Right cardiac atrium (tissue), 5 donors: ENCODE measurements at regions of chr14 and their contacts with region 1.

Region 1: GRCh38 chr14:74663884-74664283 is 49.0 kb downstream of the AREL1 start:
- DNase-seq: no peak
- ATAC-seq: peak; percentile 12 to 39
- H3K4me3 ChIP-seq: no peak overlapping the region
- H3K27ac ChIP-seq: peak overlapping the region; percentile 66
- H3K4me1 ChIP-seq: peaks cover 9% of the 10 kb centered on the region
- H3K27me3 ChIP-seq: no peaks in the 10 kb centered on the region

Region 2: GRCh38 chr14:74618078-74618952 is 45.6 kb before region 1 on chr14:
- intact Hi-C with region 1: loop called in 1 of 4 experiments (anchors 5 kb)
- DNase-seq: no peak
- ATAC-seq: peak in 1 of 2 donors; percentile 12
- H3K4me3 ChIP-seq: no peak overlapping the region
- H3K27ac ChIP-seq: peak overlapping the region; percentile 20
- H3K4me1 ChIP-seq: peaks cover 14% of the 10 kb centered on the region
- H3K27me3 ChIP-seq: no peaks in the 10 kb centered on the region